Dendritic cell treated with granulocyte-macrophage colony-stimulating factor and Interleukin-4, amounts not matched to agents 40 ng/mL and 50 ng/mL, for 4 days (primary cell): ENCODE measurements at regions of chr1 and their contacts with region 1.

Region 1: GRCh38 chr1:42816585-42817434 is at the starts of genes ERMAP and SVBP:
- H3K4me3 Mint-ChIP-seq: peak within 1 kb of the TSS; percentile 85
- H3K27ac Mint-ChIP-seq: peak within 1 kb of the TSS; percentile 90
- H3K4me1 Mint-ChIP-seq: peaks cover 38% of the 10 kb centered on the region
- H3K27me3 Mint-ChIP-seq: no peaks in the 10 kb centered on the region

Region 2: DNA sequence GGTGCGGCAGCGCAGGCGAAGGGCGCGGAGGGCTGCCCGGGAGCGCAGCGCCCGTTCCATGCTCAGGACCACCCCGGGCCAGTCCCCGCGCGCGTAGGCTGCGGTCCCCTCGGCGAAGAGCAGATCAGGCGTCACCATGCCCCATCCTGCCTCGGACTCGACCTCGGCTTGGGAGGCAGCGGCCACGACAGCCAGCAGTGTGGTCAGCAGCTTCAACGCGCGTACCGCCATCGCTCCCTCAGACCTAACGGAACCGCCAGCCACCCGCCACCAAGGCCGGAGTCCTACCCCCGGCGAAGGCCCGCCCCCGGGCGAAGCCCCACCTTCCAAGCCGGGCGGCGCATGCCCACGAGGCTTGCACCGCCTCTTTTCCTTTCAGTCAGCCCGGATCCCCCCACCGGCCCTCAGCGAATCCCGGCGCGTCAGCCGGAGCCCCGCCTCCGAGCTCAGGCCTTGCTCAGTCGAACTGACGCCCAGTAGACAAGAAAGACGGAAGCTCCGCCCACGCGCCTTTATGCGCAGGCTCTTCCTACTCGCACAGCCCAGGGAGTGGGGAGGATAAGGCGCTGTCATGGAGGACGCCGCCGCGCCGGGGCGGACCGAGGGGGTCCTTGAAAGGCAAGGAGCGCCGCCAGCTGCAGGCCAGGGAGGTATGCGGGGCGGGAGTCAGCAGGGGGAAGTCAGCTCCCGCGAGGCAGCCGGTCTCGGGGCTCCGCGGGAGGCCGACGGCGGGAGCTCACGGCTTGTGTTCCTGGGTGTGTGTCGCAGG is 49.9 kb before region 1 on chr1 and contains the starts of genes C1orf50 and P3H1:
- intact Hi-C with region 1: loop called (anchors 2 kb)
- H3K4me3 Mint-ChIP-seq: no peak within 1 kb of the TSS
- H3K27ac Mint-ChIP-seq: no peak within 1 kb of the TSS
- H3K4me1 Mint-ChIP-seq: peaks cover 39% of the 10 kb centered on the region
- H3K27me3 Mint-ChIP-seq: no peaks in the 10 kb centered on the region

Region 3: GRCh38 chr1:42846257-42847110 is 29.7 kb after region 1 on chr1 and contains the start of gene ZNF691:
- intact Hi-C with region 1: loop called (anchors 1 kb)
- H3K4me3 Mint-ChIP-seq: peak within 1 kb of the TSS; percentile 86
- H3K27ac Mint-ChIP-seq: peak within 1 kb of the TSS; percentile 81
- H3K4me1 Mint-ChIP-seq: peaks cover 39% of the 10 kb centered on the region
- H3K27me3 Mint-ChIP-seq: no peaks in the 10 kb centered on the region